GM12878 (cell line): ENCODE measurements at regions of chr3 and their contacts with region 1.

Region 1: GRCh38 chr3:146640955-146641867 is 36.1 kb upstream of the PLSCR5 start:
- DNase-seq: no peak
- ATAC-seq: peak; percentile 91
- H3K4me3 ChIP-seq: no peak overlapping the region
- H3K27ac ChIP-seq: no peak overlapping the region
- H3K4me1 ChIP-seq: no peaks in the 10 kb centered on the region
- H3K27me3 ChIP-seq: no peaks in the 10 kb centered on the region
- CTCF ChIP-seq: peak; percentile 46 to 60 (median 49); a peak in 5 of 6 replicates
- EP300 ChIP-seq: no peak
- POLR2A ChIP-seq: no peak
- RAD21 ChIP-seq: peak; percentile 80

Region 2: DNA sequence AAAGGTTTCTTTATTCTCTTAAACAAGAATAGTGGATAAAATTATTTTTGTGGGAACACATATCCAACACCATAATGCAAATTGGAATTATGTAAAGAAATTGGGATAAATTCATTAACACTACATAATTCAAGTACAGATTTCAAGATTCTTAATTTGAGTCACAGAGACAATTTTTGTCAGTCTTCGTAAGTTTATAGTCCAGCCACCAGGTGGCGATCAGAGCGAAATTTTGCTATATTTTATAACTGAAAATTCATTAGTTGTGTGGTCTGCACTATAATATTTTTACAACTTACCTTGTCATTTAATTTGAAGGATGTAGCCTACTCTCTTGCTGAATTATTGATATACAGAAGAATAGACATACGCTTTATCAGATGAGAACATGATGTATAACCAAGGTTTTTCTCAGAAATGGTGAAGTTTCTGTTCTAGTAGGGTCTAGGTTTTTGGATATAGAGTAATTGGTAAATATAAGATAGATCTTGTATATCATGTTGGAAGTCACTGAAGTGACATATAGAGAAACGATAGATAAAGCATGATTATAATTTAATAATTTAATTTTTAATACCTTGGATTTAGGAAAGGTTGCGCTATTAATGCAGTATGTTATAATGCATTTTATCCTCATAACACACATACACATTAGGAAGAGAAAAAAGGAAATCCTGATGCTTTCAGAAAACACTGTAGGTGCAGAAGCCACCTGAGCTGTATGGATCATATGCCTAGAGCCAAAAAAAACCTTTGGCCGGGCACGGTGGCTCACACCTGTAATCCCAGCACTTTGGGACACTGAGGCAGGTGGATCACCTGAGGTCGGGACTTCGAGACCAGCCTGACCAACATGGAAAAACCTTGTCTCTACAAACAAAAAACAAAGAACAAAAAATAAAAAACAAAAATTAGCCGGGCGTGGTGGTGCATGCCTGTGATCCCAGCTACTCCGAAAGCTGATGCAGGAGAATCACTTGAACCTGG is 422.0 kb before region 1 on chr3:
- CTCF ChIA-PET with region 1: interaction called, 4 read pairs
- POLR2A ChIA-PET with region 1: no interaction called
- RAD21 ChIA-PET with region 1: no interaction called
- SMC1A ChIA-PET with region 1: no interaction called
- in situ Hi-C with region 1: no loop called
- intact Hi-C with region 1: loop called (anchors 1 kb)
- DNase-seq: no peak
- ATAC-seq: peak; percentile 44; the same call in 1 of the 3 replicates
- H3K4me3 ChIP-seq: no peak overlapping the region
- H3K27ac ChIP-seq: no peak overlapping the region
- H3K4me1 ChIP-seq: no peaks in the 10 kb centered on the region
- H3K27me3 ChIP-seq: no peaks in the 10 kb centered on the region
- CTCF ChIP-seq: peak; percentile 47 to 51 (median 50); a peak in 5 of 6 replicates
- EP300 ChIP-seq: no peak
- POLR2A ChIP-seq: no peak
- RAD21 ChIP-seq: peak; percentile 53

Region 3: DNA sequence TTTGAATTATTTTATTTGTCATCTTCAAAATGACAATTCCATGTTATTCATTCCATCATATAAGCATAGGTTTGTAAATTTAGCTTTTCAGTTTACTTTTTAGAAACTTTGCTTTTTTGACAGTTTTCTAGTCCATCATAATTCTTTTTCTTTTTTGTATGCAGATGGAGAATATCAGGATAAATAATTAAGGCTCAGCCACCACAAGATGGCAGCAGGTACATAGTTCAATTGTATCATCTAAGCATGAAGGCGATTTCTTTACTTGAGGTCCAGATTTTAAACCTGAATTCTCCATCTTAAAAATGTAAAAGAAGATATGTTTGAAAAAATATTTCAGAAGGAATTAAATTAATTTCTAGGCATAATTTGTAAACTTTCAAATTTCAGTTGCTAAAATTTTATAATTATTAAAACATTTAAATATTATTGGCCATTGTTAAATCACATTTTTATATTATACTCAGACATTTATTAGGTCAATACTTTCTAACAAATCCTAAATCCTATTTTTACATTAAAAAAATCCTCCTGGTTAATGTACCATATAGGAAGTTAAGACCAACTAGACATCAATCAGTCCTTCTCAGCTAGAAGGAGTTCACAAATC is 51.2 kb before region 1 on chr3:
- CTCF ChIA-PET with region 1: interaction called, 21 read pairs
- POLR2A ChIA-PET with region 1: no interaction called
- RAD21 ChIA-PET with region 1: interaction called, 8 read pairs
- SMC1A ChIA-PET with region 1: interaction called, 9 read pairs
- in situ Hi-C with region 1: no loop called
- intact Hi-C with region 1: loop called (anchors 2 kb)
- DNase-seq: no peak
- ATAC-seq: peak; percentile 65
- H3K4me3 ChIP-seq: no peak overlapping the region
- H3K27ac ChIP-seq: no peak overlapping the region
- H3K4me1 ChIP-seq: no peaks in the 10 kb centered on the region
- H3K27me3 ChIP-seq: no peaks in the 10 kb centered on the region
- CTCF ChIP-seq: peak; percentile 30 to 51 (median 38); a peak in 5 of 6 replicates
- EP300 ChIP-seq: no peak
- POLR2A ChIP-seq: no peak
- RAD21 ChIP-seq: peak; percentile 48; the same call in 1 of the 2 replicates

Region 4: DNA sequence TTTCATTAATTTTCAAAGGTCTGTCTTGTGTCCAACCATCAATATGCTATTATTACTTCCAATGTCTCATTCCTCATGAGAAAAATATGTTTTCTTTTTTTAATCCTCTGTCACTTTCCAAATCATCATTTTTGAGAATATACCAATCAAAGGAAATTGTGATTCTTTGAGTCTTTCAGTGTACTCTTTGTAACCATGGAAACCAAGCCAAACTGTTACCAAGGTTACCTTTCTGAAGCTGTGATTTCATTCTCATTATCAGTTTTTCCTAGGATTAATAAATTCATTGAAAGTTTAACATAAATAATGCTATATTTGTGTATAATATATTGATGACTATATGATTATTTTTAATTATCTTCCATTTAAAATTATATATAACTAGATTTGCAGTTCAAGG is 19.5 kb before region 1 on chr3:
- CTCF ChIA-PET with region 1: interaction called, 15 read pairs
- POLR2A ChIA-PET with region 1: no interaction called
- RAD21 ChIA-PET with region 1: no interaction called
- SMC1A ChIA-PET with region 1: interaction called, 3 read pairs
- in situ Hi-C with region 1: no loop called
- intact Hi-C with region 1: no loop called
- DNase-seq: no peak
- ATAC-seq: no peak
- H3K4me3 ChIP-seq: no peak overlapping the region
- H3K27ac ChIP-seq: no peak overlapping the region
- H3K4me1 ChIP-seq: no peaks in the 10 kb centered on the region
- H3K27me3 ChIP-seq: no peaks in the 10 kb centered on the region
- CTCF ChIP-seq: no peak
- EP300 ChIP-seq: no peak
- POLR2A ChIP-seq: no peak
- RAD21 ChIP-seq: no peak

Region 5: DNA sequence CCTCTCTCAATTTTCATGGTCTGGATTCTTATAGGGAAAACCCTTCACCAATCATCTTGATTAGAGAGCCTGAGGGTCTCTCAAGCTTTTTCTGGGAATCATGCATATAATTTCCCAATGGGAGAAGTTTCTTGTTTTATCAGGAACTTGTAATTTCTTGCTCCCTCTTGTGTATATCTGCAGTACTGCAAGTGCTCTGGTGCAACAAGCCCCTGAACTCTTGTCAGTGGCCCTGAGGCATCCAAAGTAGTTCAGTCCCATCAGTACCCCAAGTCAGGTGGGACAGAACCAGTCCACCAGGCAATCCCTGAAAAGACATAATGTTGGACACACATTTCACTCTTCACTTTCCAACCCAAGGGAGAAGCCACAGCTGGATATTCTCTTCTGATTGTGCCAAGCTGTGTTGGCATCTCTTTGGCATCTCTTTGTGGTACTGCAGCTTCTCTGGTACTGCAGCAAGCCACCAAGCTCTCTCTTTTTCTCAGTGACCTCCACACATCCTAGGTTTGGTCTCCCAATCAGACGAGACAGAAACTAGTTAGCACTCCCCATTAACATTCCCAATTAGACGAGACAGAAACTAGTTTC is 550.7 kb after region 1 on chr3:
- CTCF ChIA-PET with region 1: no interaction called
- POLR2A ChIA-PET with region 1: no interaction called
- RAD21 ChIA-PET with region 1: interaction called, 3 read pairs
- SMC1A ChIA-PET with region 1: no interaction called
- in situ Hi-C with region 1: no loop called
- intact Hi-C with region 1: loop called (anchors 2 kb)
- DNase-seq: peak; percentile 1
- ATAC-seq: peak; percentile 68
- H3K4me3 ChIP-seq: no peak overlapping the region
- H3K27ac ChIP-seq: no peak overlapping the region
- H3K4me1 ChIP-seq: no peaks in the 10 kb centered on the region
- H3K27me3 ChIP-seq: no peaks in the 10 kb centered on the region
- CTCF ChIP-seq: peak; percentile 51 to 75 (median 70)
- EP300 ChIP-seq: no peak
- POLR2A ChIP-seq: no peak
- RAD21 ChIP-seq: peak; percentile 34; the same call in 1 of the 2 replicates